ENCODE measurements at regions of chr2 and their contacts with region 1.

Region 1: GRCh38 chr2:88055371-88056128 is at the start of gene KRCC1:
- DNase-seq: peak; percentile 94
- H3K4me3 Mint-ChIP-seq: peak within 1 kb of the TSS; percentile 99
- H3K27ac Mint-ChIP-seq: peak within 1 kb of the TSS; percentile 98
- H3K4me1 Mint-ChIP-seq: peaks cover 62% of the 10 kb centered on the region
- H3K27me3 Mint-ChIP-seq: no peaks in the 10 kb centered on the region
- total RNA-seq, gene KRCC1: 2.4 to 2.5 TPM

Region 2: DNA sequence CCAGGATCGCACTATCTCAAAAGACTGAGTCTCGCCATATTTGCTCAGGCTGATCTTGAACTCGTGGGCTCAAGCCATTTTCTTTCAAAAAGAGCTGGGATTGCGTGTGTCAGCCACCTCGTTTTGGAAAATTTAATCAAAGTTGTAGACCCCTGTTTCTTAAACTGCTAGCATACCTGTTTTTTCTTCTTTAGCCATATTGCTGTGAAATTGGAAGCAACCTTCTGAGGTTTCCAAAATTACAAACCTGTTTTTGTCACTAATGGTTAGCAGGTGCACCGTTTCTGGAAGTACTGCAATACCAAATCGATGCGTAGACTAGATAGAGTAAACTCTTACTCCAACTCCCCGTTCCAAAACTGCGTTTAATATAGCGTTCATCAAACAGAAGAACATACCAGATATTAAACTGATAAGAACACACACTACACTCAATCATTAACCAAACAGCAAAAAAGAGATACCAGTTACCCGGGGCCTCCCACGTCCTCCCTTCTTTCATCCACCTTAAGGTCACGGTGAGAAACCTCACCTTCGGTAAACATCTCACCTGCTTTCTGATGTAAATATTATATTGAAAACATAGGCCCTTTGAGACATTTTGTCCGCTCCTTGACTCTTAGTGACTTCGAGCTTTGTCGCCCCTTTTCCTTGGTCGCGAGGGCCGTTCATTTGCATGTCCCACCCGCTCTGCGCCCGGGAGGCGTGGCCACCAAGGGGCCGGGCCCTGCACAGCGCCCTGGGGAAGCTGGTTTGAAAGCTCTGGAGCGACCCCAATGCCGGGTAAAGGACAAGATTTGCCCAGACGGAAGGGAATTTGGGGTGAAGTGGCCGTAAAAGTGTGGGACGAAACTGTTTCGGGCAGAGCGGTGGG is 39.2 kb before region 1 on chr2 and contains the start of gene RNU2-63P:
- CTCF ChIA-PET with region 1: interaction called, 3 read pairs
- intact Hi-C with region 1: loop called (anchors 2 kb)
- DNase-seq: peak; percentile 78
- H3K4me3 Mint-ChIP-seq: peak within 1 kb of the TSS; percentile 94
- H3K27ac Mint-ChIP-seq: peak within 1 kb of the TSS; percentile 99
- H3K4me1 Mint-ChIP-seq: peaks cover 18% of the 10 kb centered on the region
- H3K27me3 Mint-ChIP-seq: no peaks in the 10 kb centered on the region
- total RNA-seq, gene RNU2-63P: 12.6 to 13.1 TPM

Region 3: DNA sequence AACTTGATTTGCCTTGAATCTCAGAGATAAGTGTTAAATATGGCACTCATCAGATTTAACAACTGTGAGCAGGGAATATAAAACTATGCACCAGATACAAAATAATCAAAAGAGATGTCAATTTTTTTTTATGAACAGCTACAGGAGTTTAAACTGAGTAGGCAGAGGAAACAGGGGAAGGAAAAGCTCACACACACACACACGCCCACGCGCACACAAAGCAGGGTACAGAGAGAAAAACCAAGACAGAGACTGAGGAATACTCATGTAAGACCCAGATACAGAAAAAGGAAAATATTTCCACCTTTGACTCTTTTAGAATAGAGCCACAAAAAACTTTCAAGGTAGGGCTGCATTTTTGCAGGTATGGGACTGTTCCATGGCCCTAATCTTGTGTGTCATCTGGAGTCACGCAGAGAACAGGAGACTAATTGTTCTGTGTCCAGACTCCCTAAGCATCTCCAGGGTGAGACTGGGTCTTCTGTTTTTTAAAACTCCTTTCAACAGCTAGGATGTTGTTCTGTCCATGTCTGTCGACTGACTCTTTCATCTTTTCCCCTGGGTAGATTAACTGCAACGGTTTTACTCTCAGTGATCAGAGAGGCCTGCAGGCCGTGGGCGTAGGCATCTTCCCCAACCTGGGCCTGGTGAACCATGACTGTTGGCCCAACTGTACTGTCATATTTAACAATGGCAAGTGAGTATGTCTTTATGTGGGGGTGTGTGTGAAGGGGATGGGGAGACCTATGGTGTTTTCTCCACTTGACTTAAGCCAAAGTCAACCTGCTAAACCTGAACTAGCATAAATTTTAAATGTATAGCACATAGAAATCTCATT is 35.1 kb after region 1 on chr2:
- CTCF ChIA-PET with region 1: interaction called, 4 read pairs
- intact Hi-C with region 1: loop called (anchors 2 kb)
- DNase-seq: peak; percentile 35
- H3K4me3 Mint-ChIP-seq: no peak overlapping the region
- H3K27ac Mint-ChIP-seq: peak overlapping the region; percentile 52
- H3K4me1 Mint-ChIP-seq: peaks cover 22% of the 10 kb centered on the region
- H3K27me3 Mint-ChIP-seq: no peaks in the 10 kb centered on the region

Region 4: GRCh38 chr2:88170472-88170892 is 114.9 kb after region 1 on chr2:
- CTCF ChIA-PET with region 1: interaction called, 174 read pairs
- intact Hi-C with region 1: no loop called
- DNase-seq: no peak
- H3K4me3 Mint-ChIP-seq: peak overlapping the region; percentile 56
- H3K27ac Mint-ChIP-seq: no peak overlapping the region
- H3K4me1 Mint-ChIP-seq: peaks cover 2% of the 10 kb centered on the region
- H3K27me3 Mint-ChIP-seq: peaks cover 8% of the 10 kb centered on the region

Region 5: GRCh38 chr2:88307817-88308216 is 252.3 kb after region 1 on chr2:
- CTCF ChIA-PET with region 1: interaction called, 3 read pairs
- intact Hi-C with region 1: loop called (anchors 2 kb)
- DNase-seq: peak; percentile 34
- H3K4me3 Mint-ChIP-seq: no peak overlapping the region
- H3K27ac Mint-ChIP-seq: no peak overlapping the region
- H3K4me1 Mint-ChIP-seq: no peaks in the 10 kb centered on the region
- H3K27me3 Mint-ChIP-seq: peaks cover 15% of the 10 kb centered on the region

Region 6: GRCh38 chr2:88669371-88670214 is 614.0 kb after region 1 on chr2:
- CTCF ChIA-PET with region 1: no interaction called
- intact Hi-C with region 1: loop called (anchors 5 kb)
- DNase-seq: peak; percentile 55
- H3K4me3 Mint-ChIP-seq: no peak overlapping the region
- H3K27ac Mint-ChIP-seq: no peak overlapping the region
- H3K4me1 Mint-ChIP-seq: no peaks in the 10 kb centered on the region
- H3K27me3 Mint-ChIP-seq: no peaks in the 10 kb centered on the region